Ascending aorta (tissue), 2 donors: ENCODE measurements at regions of chr1 and their contacts with region 1.

Region 1: GRCh38 chr1:156740679-156741612 is at the start of gene MRPL24:
- DNase-seq: peak; percentile 97 to 100
- H3K4me3 ChIP-seq: peak within 1 kb of the TSS; percentile 55 to 91
- H3K27ac ChIP-seq: peak within 1 kb of the TSS; percentile 87 to 91
- H3K4me1 ChIP-seq: peaks cover 4 to 28% of the 10 kb centered on the region in 2 donors
- H3K27me3 ChIP-seq: no peaks in the 10 kb centered on the region
- CTCF ChIP-seq: no peak
- total RNA-seq, gene MRPL24: 17.0 TPM

Region 2: GRCh38 chr1:156129706-156130581 is 611.0 kb before region 1 on chr1:
- intact Hi-C with region 1: loop called (anchors 10 kb)
- DNase-seq: peak; percentile 66 to 97
- H3K4me3 ChIP-seq: peak overlapping the region; percentile 46 to 93
- H3K27ac ChIP-seq: peak overlapping the region; percentile 97
- H3K4me1 ChIP-seq: peaks cover 32 to 52% of the 10 kb centered on the region in 2 donors
- H3K27me3 ChIP-seq: no peaks in the 10 kb centered on the region
- CTCF ChIP-seq: peak; percentile 96 to 98 (median 96)

Region 3: GRCh38 chr1:156625436-156626078 is 115.4 kb before region 1 on chr1:
- intact Hi-C with region 1: no loop called
- DNase-seq: no peak
- H3K4me3 ChIP-seq: peak overlapping the region; percentile 31 to 62
- H3K27ac ChIP-seq: no peak overlapping the region
- H3K4me1 ChIP-seq: peaks cover 8 to 17% of the 10 kb centered on the region in 2 donors
- H3K27me3 ChIP-seq: peaks cover 29% of the 10 kb centered on the region
- CTCF ChIP-seq: peak; percentile 67 to 80 (median 70)

Region 4: GRCh38 chr1:156751758-156752757 is 11.1 kb after region 1 on chr1:
- intact Hi-C with region 1: loop called (anchors 1 kb)
- DNase-seq: peak; percentile 86 to 98
- H3K4me3 ChIP-seq: peak overlapping the region; percentile 73 to 91
- H3K27ac ChIP-seq: peak overlapping the region; percentile 87 to 89
- H3K4me1 ChIP-seq: peaks cover 10 to 28% of the 10 kb centered on the region in 2 donors
- H3K27me3 ChIP-seq: no peaks in the 10 kb centered on the region
- CTCF ChIP-seq: peak in 1 of 3 experiments; percentile 27